Dorsolateral prefrontal cortex (tissue), 120 donors: ENCODE measurements at regions of chr12 and their contacts with region 1.

Region 1: GRCh38 chr12:108514973-108515814 is at the start of gene FICD:
- DNase-seq: peak; percentile 100
- H3K4me3 ChIP-seq: peak within 1 kb of the TSS; percentile 55 to 98 (median 89)
- H3K27ac ChIP-seq: peak within 1 kb of the TSS in 45 of 59 donors; percentile 8 to 87 (median 67)
- H3K27me3 ChIP-seq: no peaks in the 10 kb centered on the region
- CTCF ChIP-seq: peak in 43 of 56 donors; percentile 12 to 62 (median 34)
- total RNA-seq, gene FICD: 5.6 to 13.7 (median 8.3) TPM

Region 2: GRCh38 chr12:107679336-107679735 is 835.9 kb before region 1 on chr12:
- intact Hi-C with region 1: loop called (anchors 5 to 10 kb)
- DNase-seq: no peak
- H3K4me3 ChIP-seq: no peak overlapping the region
- H3K27ac ChIP-seq: no peak overlapping the region
- H3K27me3 ChIP-seq: peaks cover 0 to 23% (median 0%) of the 10 kb centered on the region in 45 donors
- CTCF ChIP-seq: no peak

Region 3: GRCh38 chr12:107760809-107761501 is 754.2 kb before region 1 on chr12 and contains the start of gene PRDM4:
- intact Hi-C with region 1: loop called in 1 of 2 experiments (anchors 5 kb)
- DNase-seq: peak; percentile 82 to 96 (median 92)
- H3K4me3 ChIP-seq: peak within 1 kb of the TSS; percentile 68 to 96 (median 85)
- H3K27ac ChIP-seq: peak within 1 kb of the TSS in 55 of 59 donors; percentile 2 to 88 (median 72)
- H3K27me3 ChIP-seq: no peaks in the 10 kb centered on the region
- CTCF ChIP-seq: peak in 53 of 56 donors; percentile 6 to 84 (median 50)
- total RNA-seq, gene PRDM4: 21.5 to 45.7 (median 32.4) TPM

Region 4: DNA sequence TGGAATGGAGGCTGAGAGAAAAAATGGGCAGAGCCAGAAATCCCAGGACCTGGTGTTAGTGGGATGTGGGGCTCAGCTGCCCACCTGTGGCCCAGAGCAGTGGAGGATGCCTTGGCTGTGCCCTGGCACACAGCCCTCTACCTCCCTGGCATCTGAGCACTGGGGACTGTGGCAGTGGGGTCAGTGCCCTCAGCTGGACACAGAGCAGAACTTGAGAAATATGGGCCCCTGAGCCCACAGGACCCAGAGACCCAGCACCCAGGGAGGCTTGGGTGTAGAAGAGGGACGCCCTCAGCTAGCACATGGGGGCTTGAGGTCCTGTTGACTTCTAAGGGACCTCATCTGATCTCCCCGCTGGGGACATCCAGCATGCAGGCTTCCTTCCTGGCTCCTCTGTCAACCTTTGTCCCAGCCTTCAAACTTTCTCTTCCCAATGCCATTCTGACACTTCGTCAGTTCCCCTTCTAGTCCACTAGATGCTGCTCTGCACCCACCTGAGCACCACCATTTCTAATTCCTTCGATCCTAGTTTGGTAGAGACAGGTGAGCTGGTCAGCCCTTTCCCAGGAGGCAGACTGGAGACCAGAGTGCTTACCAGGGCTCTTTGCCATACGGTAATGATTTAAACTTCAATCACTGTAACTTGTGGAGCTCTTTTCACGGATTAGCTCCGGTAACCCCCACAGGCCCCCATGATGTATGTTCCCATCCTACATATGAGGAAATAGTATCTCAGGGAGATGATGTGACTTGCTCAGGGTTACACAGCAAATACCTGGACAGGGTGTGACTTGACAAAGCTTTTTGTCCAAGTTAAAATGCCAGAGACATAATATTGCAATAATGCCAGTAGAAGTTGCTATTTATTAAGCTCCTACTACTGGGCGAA is 597.0 kb before region 1 on chr12:
- intact Hi-C with region 1: loop called (anchors 5 to 10 kb)
- DNase-seq: peak in 2 of 10 donors; percentile 22 to 34
- H3K4me3 ChIP-seq: no peak overlapping the region
- H3K27ac ChIP-seq: no peak overlapping the region
- H3K27me3 ChIP-seq: peaks cover 0 to 36% (median 4%) of the 10 kb centered on the region in 45 donors
- CTCF ChIP-seq: peak in 55 of 56 donors; percentile 27 to 69 (median 55)

Region 5: GRCh38 chr12:108129017-108129812 is 386.0 kb before region 1 on chr12 and contains the start of gene WSCD2:
- intact Hi-C with region 1: loop called in 1 of 2 experiments (anchors 5 kb)
- DNase-seq: peak in 9 of 10 donors; percentile 33 to 78 (median 73)
- H3K4me3 ChIP-seq: peak within 1 kb of the TSS; percentile 24 to 76 (median 61)
- H3K27ac ChIP-seq: peak within 1 kb of the TSS in 55 of 59 donors; percentile 12 to 91 (median 72)
- H3K27me3 ChIP-seq: peaks cover 0 to 43% (median 5%) of the 10 kb centered on the region in 45 donors
- CTCF ChIP-seq: peak in 28 of 56 donors; percentile 5 to 46 (median 22)
- total RNA-seq, gene WSCD2: 15.4 to 68.3 (median 43.9) TPM

Region 6: DNA sequence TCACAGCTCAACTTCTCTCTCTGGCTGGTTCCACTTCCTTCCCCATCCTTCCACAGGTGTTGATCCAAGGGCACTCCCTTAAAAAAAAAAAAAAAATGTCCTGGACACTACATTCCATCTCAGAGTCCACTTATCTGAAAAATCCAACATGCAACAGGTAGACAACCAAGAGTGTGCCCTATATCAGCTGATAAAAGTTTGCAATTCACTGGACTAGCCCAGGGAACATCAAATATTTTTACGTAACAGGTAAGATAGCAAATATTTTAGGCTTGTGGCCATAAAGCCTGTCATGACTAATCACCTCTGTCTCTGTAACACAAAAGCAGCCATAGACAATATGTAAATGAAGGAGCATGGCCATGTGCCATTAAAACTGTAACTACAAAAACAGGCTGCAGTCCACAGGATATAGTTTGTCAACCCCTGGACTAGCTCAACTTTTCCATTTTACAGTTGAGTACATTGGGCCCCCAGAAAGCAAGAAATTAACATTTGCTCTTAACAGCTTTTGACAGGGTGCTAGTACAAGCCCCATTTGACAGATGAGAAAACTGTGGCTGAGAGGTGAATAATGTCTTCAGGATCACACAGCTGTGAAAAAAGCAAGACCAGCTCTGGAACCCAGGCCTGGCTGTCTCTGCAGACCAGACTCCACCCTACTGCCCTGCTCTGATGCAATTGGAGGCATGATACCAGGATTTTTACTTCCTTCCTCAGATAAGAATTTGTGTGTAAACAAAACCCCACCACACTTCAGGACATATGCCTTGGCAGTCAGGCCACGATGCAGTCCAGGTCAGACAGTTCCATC is 245.0 kb before region 1 on chr12:
- intact Hi-C with region 1: no loop called
- DNase-seq: no peak
- H3K4me3 ChIP-seq: no peak overlapping the region
- H3K27ac ChIP-seq: no peak overlapping the region
- H3K27me3 ChIP-seq: peaks cover 0 to 3% (median 0%) of the 10 kb centered on the region in 45 donors
- CTCF ChIP-seq: no peak

Region 7: GRCh38 chr12:108562348-108563135 is 47.3 kb after region 1 on chr12 and contains the start of gene ISCU:
- intact Hi-C with region 1: loop called (anchors 1 to 2 kb)
- DNase-seq: peak; percentile 91 to 99 (median 96)
- H3K4me3 ChIP-seq: peak within 1 kb of the TSS; percentile 69 to 100 (median 97)
- H3K27ac ChIP-seq: peak within 1 kb of the TSS; percentile 63 to 99 (median 96)
- H3K27me3 ChIP-seq: no peaks in the 10 kb centered on the region
- CTCF ChIP-seq: peak in 30 of 56 donors; percentile 9 to 60 (median 30)
- total RNA-seq, gene ISCU: 120 to 322 (median 236) TPM

Region 8: GRCh38 chr12:108773798-108774788 is 258.9 kb after region 1 on chr12:
- intact Hi-C with region 1: no loop called
- DNase-seq: peak in 9 of 10 donors; percentile 59 to 89 (median 81)
- H3K4me3 ChIP-seq: peak overlapping the region in 3 of 59 donors; percentile 6 to 12 (median 10)
- H3K27ac ChIP-seq: peak overlapping the region in 55 of 59 donors; percentile 15 to 87 (median 71)
- H3K27me3 ChIP-seq: no peaks in the 10 kb centered on the region
- CTCF ChIP-seq: no peak